Mammary epithelial cell (primary cell): ENCODE measurements at regions of chr22 and their contacts with region 1.

Region 1: DNA sequence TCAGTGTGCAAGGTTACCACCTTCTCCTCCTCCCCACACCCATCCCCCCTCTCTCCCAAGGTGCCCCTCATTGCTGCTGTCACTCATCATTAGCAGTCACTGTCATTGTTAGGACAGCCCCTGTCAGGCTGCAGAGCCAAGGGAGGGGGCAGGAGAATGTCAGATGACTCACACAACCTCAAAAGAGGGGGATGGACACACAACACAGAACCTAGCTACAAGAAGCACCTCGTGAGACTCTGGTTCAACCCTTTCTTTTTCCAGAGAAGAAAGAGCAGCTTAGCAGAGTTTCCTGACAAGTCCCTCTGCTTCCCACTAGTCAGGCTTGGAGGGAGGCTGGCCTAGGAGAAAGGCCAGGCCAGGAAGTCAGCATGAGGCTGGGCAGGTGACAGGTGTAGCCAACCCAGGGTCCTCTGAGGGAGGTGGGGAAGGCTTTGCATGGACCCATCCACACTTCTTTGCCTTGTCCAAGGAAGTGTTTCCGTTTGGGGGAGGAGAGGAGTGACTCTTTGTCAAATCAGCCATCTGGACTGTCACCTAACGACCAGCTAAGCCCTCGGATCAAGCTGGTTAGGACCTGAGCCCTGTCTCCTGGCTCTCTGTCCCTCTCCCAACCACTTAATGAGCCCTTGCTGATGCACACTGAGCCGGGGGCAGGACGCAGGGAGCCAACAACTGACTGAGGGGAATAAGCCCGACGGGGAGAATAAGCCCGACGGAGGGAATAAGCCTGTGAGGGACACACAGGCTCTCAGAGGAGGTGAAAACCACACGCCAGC is 18.3 kb downstream of the ADORA2A start:
- DNase-seq: no peak
- H3K4me3 ChIP-seq: no peak overlapping the region
- H3K27ac ChIP-seq: no peak overlapping the region
- H3K4me1 ChIP-seq: no peaks in the 10 kb centered on the region
- H3K27me3 ChIP-seq: no peaks in the 10 kb centered on the region
- CTCF ChIP-seq: no peak

Region 2: GRCh38 chr22:24410110-24410856 is 35.4 kb before region 1 on chr22:
- CTCF ChIA-PET with region 1: no interaction called
- dilution Hi-C with region 1: loop called (anchors 5 kb)
- in situ Hi-C with region 1: no loop called
- intact Hi-C with region 1: no loop called
- DNase-seq: no peak
- H3K4me3 ChIP-seq: no peak overlapping the region
- H3K27ac ChIP-seq: no peak overlapping the region
- H3K4me1 ChIP-seq: peaks cover 17% of the 10 kb centered on the region
- H3K27me3 ChIP-seq: no peaks in the 10 kb centered on the region
- CTCF ChIP-seq: no peak

Region 3: DNA sequence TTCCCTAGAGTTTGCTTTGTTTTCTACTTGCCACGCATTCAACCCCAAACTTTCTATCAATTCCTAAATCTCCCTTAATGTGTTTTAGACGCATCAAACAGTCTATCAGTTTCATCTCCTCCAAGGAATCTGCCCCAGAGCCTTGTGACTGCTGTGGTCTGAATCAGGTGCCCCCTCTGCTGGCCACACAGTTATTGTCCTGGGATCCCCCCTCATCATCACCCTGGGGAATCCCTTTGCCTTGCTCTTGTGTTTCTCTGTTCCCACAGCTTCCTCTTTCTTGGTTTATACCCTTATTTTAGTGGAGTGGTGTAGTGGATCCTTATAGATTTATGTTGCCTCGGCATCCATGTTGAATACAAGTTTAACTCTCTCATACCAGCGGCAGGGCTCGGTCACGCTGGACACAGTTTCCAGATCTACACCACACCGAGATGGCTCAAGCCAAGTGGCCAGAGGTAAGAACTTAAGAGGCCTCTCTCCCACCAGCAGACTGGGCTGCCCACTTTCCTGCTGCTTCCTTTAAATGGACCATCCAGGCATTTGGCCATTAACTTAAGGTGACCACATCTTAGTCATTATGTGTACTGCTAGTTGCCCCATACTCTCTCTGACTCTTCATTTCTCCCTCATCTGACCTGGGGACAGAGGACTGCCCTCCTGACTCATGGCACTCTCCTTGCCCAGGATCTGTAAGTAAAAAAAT is 57.6 kb after region 1 on chr22:
- CTCF ChIA-PET with region 1: no interaction called
- dilution Hi-C with region 1: no loop called
- in situ Hi-C with region 1: no loop called
- intact Hi-C with region 1: no loop called
- DNase-seq: peak; percentile 56
- H3K4me3 ChIP-seq: no peak overlapping the region
- H3K27ac ChIP-seq: no peak overlapping the region
- H3K4me1 ChIP-seq: no peaks in the 10 kb centered on the region
- H3K27me3 ChIP-seq: no peaks in the 10 kb centered on the region
- CTCF ChIP-seq: peak; percentile 69 to 78

Region 4: DNA sequence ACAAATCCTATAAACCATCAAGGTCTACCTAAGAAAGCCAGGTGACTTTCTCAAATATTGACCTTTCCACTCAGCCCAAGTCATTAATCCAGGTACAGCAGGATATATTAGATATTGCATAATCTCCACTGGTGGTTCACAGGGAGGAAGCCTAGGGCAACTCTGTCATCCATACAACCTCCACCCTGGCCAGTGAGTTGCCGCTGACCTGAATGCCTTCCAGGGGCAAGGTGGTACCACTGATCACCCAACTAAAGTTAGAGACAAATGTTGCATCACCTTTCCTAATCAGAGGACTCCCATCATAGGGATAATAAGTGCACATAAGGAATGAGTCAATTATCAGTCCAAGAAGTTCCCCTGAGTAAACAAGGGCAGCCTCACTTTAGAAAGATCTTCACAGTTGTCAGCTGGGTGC is 86.4 kb after region 1 on chr22:
- CTCF ChIA-PET with region 1: no interaction called
- dilution Hi-C with region 1: loop called (anchors 10 kb)
- in situ Hi-C with region 1: no loop called
- intact Hi-C with region 1: no loop called
- DNase-seq: no peak
- H3K4me3 ChIP-seq: no peak overlapping the region
- H3K27ac ChIP-seq: no peak overlapping the region
- H3K4me1 ChIP-seq: no peaks in the 10 kb centered on the region
- H3K27me3 ChIP-seq: no peaks in the 10 kb centered on the region
- CTCF ChIP-seq: no peak